ENCODE measurements at regions of chr11 and their contacts with region 1.

Region 1: GRCh38 chr11:18669220-18669598 is 29.4 kb upstream of the TMEM86A start:
- DNase-seq: no peak
- ATAC-seq: no peak
- H3K4me3 Mint-ChIP-seq: peak overlapping the region in 7 of 10 donors; percentile 7 to 48 (median 23)
- H3K27ac Mint-ChIP-seq: peak overlapping the region; percentile 2 to 82 (median 64)
- H3K4me1 Mint-ChIP-seq: peaks cover 20 to 70% (median 51%) of the 10 kb centered on the region in 4 donors
- H3K27me3 Mint-ChIP-seq: no peaks in the 10 kb centered on the region

Region 2: DNA sequence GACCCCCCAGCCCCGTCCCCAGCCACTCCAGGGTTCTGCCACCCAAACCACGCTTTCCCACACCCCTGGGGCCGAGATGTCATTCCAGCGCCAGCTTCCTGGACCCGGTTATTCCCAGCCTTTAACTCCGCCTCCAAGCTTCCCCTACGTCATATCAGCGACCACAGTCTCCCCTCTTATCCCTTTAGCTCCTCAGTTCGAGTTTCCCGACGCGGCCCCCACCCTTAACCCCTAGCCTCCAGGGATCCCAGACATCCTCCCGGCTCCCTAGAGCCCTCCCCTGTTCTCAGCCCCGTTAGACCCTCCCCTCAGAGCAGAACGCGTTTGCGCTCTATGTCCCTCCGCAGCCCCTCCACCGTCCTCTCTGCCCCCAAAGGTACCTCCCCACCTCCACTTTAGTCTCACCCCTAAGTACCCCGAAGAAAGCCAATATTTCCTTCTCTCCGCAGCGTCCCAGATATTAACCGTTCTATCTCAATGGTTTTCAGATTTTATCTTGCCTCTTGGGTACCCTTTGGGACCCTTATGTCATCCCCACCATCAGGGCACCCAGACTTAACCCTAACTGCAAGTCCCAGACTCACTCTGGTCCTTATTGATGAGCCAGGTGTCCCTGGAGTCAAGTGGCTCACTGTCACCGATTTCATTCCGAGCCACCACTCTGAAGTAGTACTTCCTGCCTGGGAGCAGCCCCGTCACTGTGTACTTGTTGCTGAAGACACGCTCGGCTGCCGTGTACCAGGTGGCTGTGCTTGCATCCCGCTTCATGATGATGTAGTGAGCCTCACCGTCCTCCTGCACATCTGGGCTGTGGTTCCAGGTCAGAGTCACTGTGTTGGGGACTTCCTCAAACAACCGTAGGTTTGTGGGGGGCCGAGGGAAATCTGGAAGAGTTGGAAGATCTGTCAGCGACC is 37.4 kb after region 1 on chr11:
- POLR2A ChIA-PET with region 1: interaction called, 10 read pairs
- DNase-seq: peak in 9 of 10 donors; percentile 23 to 82 (median 60)
- ATAC-seq: peak; percentile 83 to 91
- H3K4me3 Mint-ChIP-seq: peak overlapping the region; percentile 86 to 100 (median 94)
- H3K27ac Mint-ChIP-seq: peak overlapping the region; percentile 82 to 98 (median 96)
- H3K4me1 Mint-ChIP-seq: peaks cover 16 to 27% (median 24%) of the 10 kb centered on the region in 4 donors
- H3K27me3 Mint-ChIP-seq: peaks cover 0 to 1% (median 0%) of the 10 kb centered on the region in 5 donors

Region 3: GRCh38 chr11:18722293-18722637 is 53.1 kb after region 1 on chr11:
- POLR2A ChIA-PET with region 1: no interaction called
- DNase-seq: no peak
- ATAC-seq: no peak
- H3K4me3 Mint-ChIP-seq: peak overlapping the region in 9 of 10 donors; percentile 74 to 96 (median 92)
- H3K27ac Mint-ChIP-seq: peak overlapping the region in 7 of 10 donors; percentile 55 to 95 (median 68)
- H3K4me1 Mint-ChIP-seq: peaks cover 2 to 22% (median 8%) of the 10 kb centered on the region in 4 donors
- H3K27me3 Mint-ChIP-seq: no peaks in the 10 kb centered on the region